Activated naive CD4-positive, alpha-beta T cell treated with anti-CD3 and anti-CD28 coated beads, Interleukin-2, amount 10 ng/mL, durations not matched to agents 7 days and 5 days (primary cell): ENCODE measurements at regions of chr11 and their contacts with region 1.

Region 1: GRCh38 chr11:35138943-35139721 is at the start of gene CD44:
- DNase-seq: peak; percentile 81
- H3K4me3 Mint-ChIP-seq: peak within 1 kb of the TSS; percentile 88
- H3K27ac Mint-ChIP-seq: peak within 1 kb of the TSS; percentile 94
- H3K4me1 Mint-ChIP-seq: peaks cover 48% of the 10 kb centered on the region
- H3K27me3 Mint-ChIP-seq: peaks cover 3% of the 10 kb centered on the region

Region 2: DNA sequence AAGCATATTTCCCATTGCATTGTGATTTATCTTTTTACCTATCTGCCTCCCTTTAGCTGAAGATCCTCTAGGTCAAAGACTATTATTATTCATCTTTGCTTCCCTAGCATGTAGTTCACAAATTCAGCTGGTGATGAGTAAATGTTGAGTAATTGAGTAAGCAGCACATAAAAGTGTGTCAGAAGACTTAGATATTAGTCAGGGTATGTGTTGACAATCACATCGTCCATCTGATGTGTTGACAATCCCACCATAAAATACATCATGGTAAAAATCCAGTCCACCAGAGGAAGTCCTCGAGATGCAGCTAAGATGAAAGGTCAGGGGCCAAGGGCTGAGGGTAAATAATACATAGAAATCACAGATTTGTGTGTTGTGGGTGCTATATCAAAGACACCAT is 758.4 kb before region 1 on chr11:
- CTCF ChIA-PET with region 1: no interaction called
- DNase-seq: no peak
- H3K4me3 Mint-ChIP-seq: no peak overlapping the region
- H3K27ac Mint-ChIP-seq: no peak overlapping the region
- H3K4me1 Mint-ChIP-seq: no peaks in the 10 kb centered on the region
- H3K27me3 Mint-ChIP-seq: peaks cover 6% of the 10 kb centered on the region

Region 3: DNA sequence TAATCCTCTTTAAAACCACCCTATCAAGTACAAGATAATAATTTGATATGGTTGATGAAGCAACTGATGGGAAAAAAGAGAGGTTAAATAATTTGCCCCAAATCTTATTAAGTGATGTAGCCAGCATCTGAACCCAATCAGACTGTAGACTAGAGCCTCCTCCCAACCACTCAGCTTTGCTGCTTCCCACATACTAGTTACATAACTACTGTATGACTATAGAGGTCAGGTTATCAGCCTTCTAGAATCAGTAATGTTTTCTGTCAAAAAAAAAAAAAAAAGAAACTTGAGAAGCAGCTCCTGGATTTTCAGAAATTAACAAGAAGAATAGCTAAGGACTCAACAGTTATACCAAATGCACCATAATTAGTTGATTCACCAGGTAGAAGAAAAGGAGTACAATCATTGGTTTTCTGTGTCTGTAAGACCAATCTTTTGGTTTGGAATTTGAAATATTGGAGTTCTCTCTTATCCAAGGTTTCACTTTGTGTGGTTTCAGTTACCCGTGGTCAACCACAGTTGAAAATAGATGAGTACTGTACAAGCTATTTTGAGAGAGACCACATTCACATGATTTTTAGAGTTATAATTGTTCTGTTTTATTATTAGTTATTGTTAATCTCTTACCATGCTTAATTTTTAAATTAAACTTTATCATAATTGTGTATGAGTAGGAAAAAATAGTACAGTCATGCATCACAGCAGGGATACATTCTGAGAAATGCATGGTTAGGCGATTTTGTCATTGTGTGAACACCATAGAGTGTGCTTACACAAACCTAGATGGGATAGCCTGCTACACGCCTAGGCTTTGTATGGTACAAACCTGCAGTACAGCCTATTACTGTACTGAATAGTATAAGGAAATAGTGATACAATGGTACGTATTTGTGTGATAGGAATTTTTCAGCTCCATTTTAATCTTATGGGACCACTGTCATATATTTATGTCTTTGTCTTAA is 150.6 kb before region 1 on chr11:
- CTCF ChIA-PET with region 1: no interaction called
- DNase-seq: no peak
- H3K4me3 Mint-ChIP-seq: no peak overlapping the region
- H3K27ac Mint-ChIP-seq: no peak overlapping the region
- H3K4me1 Mint-ChIP-seq: peaks cover 11% of the 10 kb centered on the region
- H3K27me3 Mint-ChIP-seq: no peaks in the 10 kb centered on the region

Region 4: DNA sequence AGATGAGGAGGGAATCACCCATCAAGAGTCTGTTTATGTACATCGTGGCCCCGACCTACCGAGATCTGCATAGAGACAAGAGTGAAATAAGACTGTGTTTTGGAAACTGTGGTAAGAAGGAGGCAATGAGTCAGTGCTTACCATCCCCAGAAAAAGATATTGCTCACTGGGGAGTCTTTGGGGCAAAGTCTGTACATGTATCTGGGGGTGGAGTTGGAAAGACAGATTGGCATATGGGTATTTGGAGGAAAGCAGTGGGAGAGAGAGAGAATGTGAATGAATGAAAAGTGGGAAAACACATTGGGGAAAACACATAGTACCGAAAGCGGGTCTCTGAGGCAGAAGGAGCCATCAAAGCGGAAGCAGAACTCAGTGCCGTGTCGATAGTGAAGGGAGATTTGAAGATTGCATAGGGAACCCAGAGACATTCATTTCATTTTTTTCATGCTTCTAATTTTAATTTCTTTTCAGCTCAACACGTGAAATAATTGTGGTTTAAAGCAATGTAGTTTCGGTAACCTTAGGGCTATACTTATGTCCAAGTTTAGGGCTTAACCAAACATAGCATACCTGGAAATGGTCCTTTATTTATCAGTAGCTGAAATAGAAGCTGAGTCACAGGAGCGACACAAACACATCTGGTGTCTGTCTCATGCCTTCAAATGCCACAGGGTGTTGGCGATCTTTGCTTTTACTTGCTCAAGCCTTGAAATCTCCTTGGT is 98.8 kb before region 1 on chr11:
- CTCF ChIA-PET with region 1: interaction called, 19 read pairs
- DNase-seq: peak; percentile 71
- H3K4me3 Mint-ChIP-seq: peak overlapping the region; percentile 73
- H3K27ac Mint-ChIP-seq: peak overlapping the region; percentile 93
- H3K4me1 Mint-ChIP-seq: peaks cover 61% of the 10 kb centered on the region
- H3K27me3 Mint-ChIP-seq: peaks cover 8% of the 10 kb centered on the region

Region 5: GRCh38 chr11:35237860-35238715 is 99.0 kb after region 1 on chr11:
- CTCF ChIA-PET with region 1: interaction called, 11 read pairs
- DNase-seq: peak; percentile 58
- H3K4me3 Mint-ChIP-seq: no peak overlapping the region
- H3K27ac Mint-ChIP-seq: no peak overlapping the region
- H3K4me1 Mint-ChIP-seq: peaks cover 78% of the 10 kb centered on the region
- H3K27me3 Mint-ChIP-seq: peaks cover 14% of the 10 kb centered on the region